WTC11 (cell line): ENCODE measurements at regions of chr11 and their contacts with region 1.

Region 1: DNA sequence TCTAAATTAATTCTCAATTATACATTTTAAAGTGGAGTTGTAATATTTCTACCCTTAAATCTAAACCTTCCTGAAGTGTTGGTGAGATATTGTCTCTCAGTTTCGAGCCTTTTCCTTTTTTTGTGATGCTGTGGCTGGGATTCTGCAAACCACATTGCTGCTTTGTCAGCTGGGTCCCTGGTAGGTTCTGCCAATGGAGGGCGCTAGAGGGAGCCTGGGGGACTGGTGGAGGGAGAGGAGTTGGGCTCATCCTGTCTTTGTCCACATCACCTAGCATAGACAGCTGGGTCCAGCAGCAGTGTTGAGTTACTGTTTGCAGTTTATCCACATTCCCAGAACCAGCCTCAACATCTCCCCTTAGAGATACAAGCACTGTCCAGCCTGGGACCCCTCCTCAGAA is 41.0 kb downstream of the TRAF6 start:
- DNase-seq: peak; percentile 92
- ATAC-seq: peak; percentile 96
- H3K4me3 Mint-ChIP-seq: no peak overlapping the region
- H3K27ac Mint-ChIP-seq: no peak overlapping the region
- H3K4me1 Mint-ChIP-seq: peaks cover 7% of the 10 kb centered on the region; the same call in 1 of the 2 replicates
- H3K27me3 Mint-ChIP-seq: peaks cover 13% of the 10 kb centered on the region
- CTCF ChIP-seq: peak; percentile 70

Region 2: DNA sequence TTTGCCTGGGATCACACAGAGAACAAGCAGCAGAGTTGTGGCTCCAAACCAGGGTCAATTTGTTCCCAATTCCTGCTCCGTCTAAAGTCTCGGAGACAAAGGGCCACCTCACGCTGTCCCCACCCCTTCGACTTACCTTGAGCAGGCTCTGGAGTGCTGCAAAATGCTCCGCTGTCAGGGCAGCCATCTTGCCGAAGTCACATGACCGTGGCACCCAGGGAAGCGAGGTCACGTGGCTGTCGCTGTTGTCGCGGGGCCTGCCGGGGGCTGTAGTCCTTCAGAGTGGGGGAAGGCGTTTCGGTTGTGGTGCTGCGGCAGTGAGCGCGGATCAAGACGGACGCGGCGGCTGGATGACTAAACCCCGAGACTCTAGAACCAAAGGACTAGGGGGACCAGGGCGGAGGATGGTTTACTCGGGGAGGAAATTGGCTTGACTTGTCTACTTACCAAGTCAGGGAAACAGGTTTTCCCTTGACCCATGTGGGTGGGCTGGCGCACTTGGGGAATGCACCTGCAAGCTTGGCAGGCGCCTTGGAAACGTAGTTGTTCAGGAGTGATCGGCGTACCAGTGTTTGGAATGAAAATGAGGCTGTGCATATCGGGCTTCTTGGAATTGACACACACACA is 179.7 kb before region 1 on chr11 and contains the start of gene COMMD9:
- CTCF ChIA-PET with region 1: interaction called, 21 read pairs
- POLR2A ChIA-PET with region 1: no interaction called
- DNase-seq: peak; percentile 96
- ATAC-seq: peak; percentile 94
- H3K4me3 Mint-ChIP-seq: peak within 1 kb of the TSS; percentile 92
- H3K27ac Mint-ChIP-seq: peak within 1 kb of the TSS; percentile 80
- H3K4me1 Mint-ChIP-seq: peaks cover 5% of the 10 kb centered on the region
- H3K27me3 Mint-ChIP-seq: peaks cover 24% of the 10 kb centered on the region
- CTCF ChIP-seq: no peak
- total RNA-seq, gene COMMD9: 26.1 to 33.3 TPM (median 27.1 TPM) in 3 replicates

Region 3: GRCh38 chr11:36455658-36456111 is 13.4 kb before region 1 on chr11:
- CTCF ChIA-PET with region 1: interaction called, 21 read pairs
- POLR2A ChIA-PET with region 1: no interaction called
- DNase-seq: no peak
- ATAC-seq: no peak
- H3K4me3 Mint-ChIP-seq: no peak overlapping the region
- H3K27ac Mint-ChIP-seq: no peak overlapping the region
- H3K4me1 Mint-ChIP-seq: peaks cover 27% of the 10 kb centered on the region
- H3K27me3 Mint-ChIP-seq: no peaks in the 10 kb centered on the region
- CTCF ChIP-seq: no peak